ENCODE measurements at regions of chr7 and their contacts with region 1.

Region 1: GRCh38 chr7:127347567-127348246 is 44.8 kb downstream of the ZNF800 start:
- DNase-seq: peak; percentile 71
- H3K4me3 ChIP-seq: peak overlapping the region in 3 of 4 donors; percentile 37 to 42 (median 41)
- H3K27ac ChIP-seq: no peak overlapping the region
- H3K4me1 ChIP-seq: peaks cover 0 to 8% (median 5%) of the 10 kb centered on the region in 4 donors
- H3K27me3 ChIP-seq: no peaks in the 10 kb centered on the region
- CTCF ChIP-seq: peak in 3 of 4 experiments; percentile 8 to 47 (median 10)
- EP300 ChIP-seq: no peak
- POLR2A ChIP-seq: no peak

Region 2: DNA sequence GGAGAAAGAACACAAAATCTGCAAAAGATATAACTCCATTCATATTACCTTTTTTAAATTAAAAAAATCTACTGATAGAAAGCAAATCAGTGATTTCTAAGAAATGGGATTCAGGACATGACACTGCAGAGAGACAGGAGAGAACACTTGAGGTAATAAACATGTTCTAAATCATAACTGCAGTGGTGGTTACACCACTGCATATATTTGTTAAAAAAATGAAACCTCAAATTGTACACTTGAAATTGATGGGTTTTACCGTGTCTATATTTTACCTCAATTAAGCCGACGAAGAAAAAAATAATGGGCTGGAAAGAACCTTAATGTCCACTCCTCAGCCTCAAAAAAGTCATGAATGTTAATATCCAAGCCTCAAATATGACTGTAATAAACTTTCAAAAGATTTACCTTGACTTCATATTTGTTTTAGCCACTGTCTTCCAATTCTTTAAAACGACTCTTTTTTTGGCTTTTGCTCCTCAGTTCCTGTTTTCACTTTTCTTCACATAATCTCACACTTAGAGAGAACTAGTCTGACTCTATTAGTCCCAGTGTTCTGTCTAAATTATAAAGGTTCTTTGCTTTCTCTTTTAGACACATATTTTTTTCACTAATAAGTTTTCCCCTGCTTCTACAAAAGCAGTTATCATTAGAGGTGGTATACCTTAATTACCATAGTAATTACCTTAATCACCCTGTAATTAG is 597.3 kb before region 1 on chr7:
- intact Hi-C with region 1: no loop called
- DNase-seq: no peak
- H3K4me3 ChIP-seq: no peak overlapping the region
- H3K27ac ChIP-seq: no peak overlapping the region
- H3K4me1 ChIP-seq: no peaks in the 10 kb centered on the region
- H3K27me3 ChIP-seq: no peaks in the 10 kb centered on the region
- CTCF ChIP-seq: no peak
- EP300 ChIP-seq: no peak
- POLR2A ChIP-seq: no peak

Region 3: DNA sequence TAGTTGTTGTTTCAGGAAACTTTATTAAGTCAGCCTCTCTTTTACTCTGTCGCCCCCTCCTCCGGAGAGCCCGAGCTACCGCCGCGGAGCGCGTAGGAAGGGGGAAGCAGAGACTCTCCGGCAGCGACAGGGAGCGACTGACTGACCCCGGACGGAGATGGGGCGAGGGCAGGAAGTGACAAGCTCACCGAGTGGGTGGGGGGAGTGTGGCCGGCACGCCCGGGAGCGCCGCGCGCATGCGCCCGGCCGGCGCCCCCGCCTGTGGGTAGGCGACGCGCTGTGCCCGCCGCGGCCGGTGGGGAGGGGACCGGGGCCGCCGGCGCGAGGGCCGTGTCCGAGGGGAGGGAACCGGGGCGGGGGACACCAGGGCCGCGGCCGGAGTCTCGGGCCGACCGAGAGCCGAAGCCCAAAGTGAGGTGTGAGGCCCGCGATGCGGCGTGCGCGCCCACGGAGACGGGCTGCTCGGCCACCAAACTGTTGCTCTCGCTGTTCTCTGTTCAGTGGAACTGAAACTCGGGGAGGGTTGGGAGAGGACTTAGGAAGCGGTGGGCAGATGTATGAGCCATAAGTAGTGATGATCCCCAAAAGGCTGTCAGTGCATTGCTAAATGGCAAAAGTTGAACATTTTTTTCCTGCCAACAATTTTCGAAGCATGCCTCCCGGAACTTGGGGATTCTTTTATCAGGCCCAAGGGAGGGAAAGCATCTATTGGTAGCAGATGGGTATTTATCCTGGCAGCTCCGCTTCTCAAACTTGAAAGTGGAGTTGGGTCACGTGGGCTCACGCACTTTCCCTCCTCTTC is 45.1 kb after region 1 on chr7 and contains the start of gene ZNF800:
- intact Hi-C with region 1: loop called (anchors 5 kb)
- DNase-seq: peak; percentile 96
- H3K4me3 ChIP-seq: peak within 1 kb of the TSS; percentile 72 to 98 (median 96)
- H3K27ac ChIP-seq: peak within 1 kb of the TSS; percentile 95 to 97 (median 97)
- H3K4me1 ChIP-seq: peaks cover 0 to 26% (median 23%) of the 10 kb centered on the region in 4 donors
- H3K27me3 ChIP-seq: no peaks in the 10 kb centered on the region
- CTCF ChIP-seq: no peak
- EP300 ChIP-seq: no peak
- POLR2A ChIP-seq: peak; percentile 81 to 85
- total RNA-seq, gene ZNF800: 29.2 to 39.1 (median 36.0) TPM

Region 4: GRCh38 chr7:127514499-127514898 is 166.8 kb after region 1 on chr7:
- intact Hi-C with region 1: loop called (anchors 10 kb)
- DNase-seq: no peak
- H3K4me3 ChIP-seq: no peak overlapping the region
- H3K27ac ChIP-seq: no peak overlapping the region
- H3K4me1 ChIP-seq: no peaks in the 10 kb centered on the region
- H3K27me3 ChIP-seq: peaks cover 0 to 6% (median 0%) of the 10 kb centered on the region in 3 donors
- CTCF ChIP-seq: peak in 2 of 4 experiments; percentile 15 to 26
- EP300 ChIP-seq: no peak
- POLR2A ChIP-seq: no peak

Measured in sigmoid colon (tissue), 7 donors.